Cardiac septum (tissue), 1 donor: ENCODE measurements at regions of chr12 and their contacts with region 1.

Region 1: DNA sequence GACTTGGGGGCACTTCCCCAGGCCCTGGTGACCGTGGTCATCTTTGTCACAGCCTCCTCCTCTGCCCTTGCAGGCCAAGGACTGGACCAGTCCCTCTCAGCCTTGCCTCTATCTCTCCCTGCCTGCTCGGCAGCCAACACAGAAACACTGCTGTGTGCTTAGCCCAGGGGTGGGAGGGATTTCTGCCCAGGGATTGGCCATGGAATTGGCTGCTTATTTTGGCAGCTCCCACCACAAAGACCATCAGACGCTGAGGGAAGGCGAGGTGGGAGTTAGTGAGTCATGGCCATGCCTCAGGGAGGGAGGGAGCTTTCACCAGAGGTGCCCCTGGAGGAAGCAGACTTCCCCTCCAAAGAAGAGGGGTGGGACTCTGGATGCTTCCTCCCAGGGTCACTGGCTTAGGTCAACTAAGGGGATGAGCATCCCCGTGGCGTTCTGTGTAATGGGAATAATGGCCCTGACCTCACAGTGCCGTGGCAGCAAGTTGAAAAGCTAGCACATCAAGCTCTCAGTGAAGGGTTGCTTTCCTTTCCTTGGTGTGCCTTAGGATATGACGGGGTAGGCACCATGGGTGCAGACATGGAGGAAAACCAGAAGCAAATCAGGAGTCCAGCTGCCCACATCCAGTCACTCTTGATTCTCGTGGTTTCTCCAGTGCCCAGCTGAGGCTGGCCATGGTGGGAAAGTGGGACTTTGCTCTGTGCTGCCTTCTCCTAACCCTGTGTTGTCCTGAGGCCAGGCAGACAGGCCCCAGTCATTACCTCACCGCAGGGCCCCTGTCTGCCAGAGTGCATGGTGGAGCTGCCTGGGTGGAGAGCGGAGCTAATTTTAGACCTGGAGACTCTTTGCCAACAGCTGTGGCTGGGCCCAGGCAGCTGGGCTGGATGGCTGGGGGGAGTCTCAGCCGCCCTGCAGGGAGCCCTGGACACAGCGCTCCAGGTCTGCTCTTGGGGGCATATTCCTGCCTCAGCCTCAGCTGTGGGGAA is 21.4 kb downstream of the B4GALNT3 start:
- DNase-seq: peak; percentile 90

Region 2: GRCh38 chr12:138898-139534 is 342.1 kb before region 1 on chr12:
- intact Hi-C with region 1: no loop called
- DNase-seq: no peak

Region 3: GRCh38 chr12:464484-465267 is 16.4 kb before region 1 on chr12:
- intact Hi-C with region 1: loop called (anchors 2 kb)
- DNase-seq: no peak